Sigmoid colon (tissue), 7 donors: ENCODE measurements at regions of chr3 and their contacts with region 1.

Region 1: GRCh38 chr3:39288300-39288808 is 8.5 kb upstream of the CX3CR1 start:
- DNase-seq: peak; percentile 81
- H3K4me3 ChIP-seq: no peak overlapping the region
- H3K27ac ChIP-seq: no peak overlapping the region
- H3K4me1 ChIP-seq: no peaks in the 10 kb centered on the region
- H3K27me3 ChIP-seq: no peaks in the 10 kb centered on the region
- CTCF ChIP-seq: peak; percentile 64 to 83 (median 74)
- EP300 ChIP-seq: no peak
- POLR2A ChIP-seq: no peak

Region 2: DNA sequence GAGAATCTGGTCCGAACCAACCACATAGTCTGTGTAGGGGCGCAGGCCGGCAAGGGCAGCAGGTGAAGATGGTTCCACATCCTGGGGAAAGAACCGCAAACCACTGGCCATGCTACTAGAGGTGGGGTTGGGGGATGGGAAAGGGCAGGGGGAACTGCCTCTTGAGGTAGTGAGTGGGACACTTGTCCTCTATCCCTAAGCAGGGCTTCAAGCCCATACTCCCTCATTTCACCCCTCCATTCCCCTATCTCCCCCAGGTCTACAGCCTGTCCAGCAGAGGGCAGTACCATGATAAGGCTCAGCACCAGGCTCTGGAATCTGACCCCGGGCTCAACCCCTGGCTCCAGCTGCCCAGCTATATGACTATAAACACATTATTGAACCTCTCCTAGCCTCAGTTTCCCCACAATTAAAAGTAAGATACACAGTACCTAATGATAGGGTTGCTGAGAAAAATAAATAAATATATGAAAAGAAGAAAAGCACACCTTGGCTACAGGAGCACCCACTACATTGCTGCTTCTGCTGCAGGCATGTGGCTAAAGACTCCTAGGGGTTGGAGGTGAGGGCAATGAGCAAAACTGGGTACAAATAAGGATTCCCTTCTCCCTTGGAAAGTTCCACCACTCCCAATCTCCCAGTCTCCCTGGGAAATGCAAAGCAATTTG is 187.2 kb before region 1 on chr3:
- intact Hi-C with region 1: loop called (anchors 2 kb)
- DNase-seq: no peak
- H3K4me3 ChIP-seq: no peak overlapping the region
- H3K27ac ChIP-seq: no peak overlapping the region
- H3K4me1 ChIP-seq: peaks cover 0 to 39% (median 29%) of the 10 kb centered on the region in 4 donors
- H3K27me3 ChIP-seq: no peaks in the 10 kb centered on the region
- CTCF ChIP-seq: peak in 3 of 4 experiments; percentile 18 to 58 (median 35)
- EP300 ChIP-seq: no peak
- POLR2A ChIP-seq: no peak

Region 3: GRCh38 chr3:39126532-39127071 is 161.8 kb before region 1 on chr3:
- intact Hi-C with region 1: loop called (anchors 1 kb)
- DNase-seq: peak; percentile 70
- H3K4me3 ChIP-seq: no peak overlapping the region
- H3K27ac ChIP-seq: peak overlapping the region in 1 of 4 donors; percentile 65
- H3K4me1 ChIP-seq: peaks cover 0 to 14% (median 10%) of the 10 kb centered on the region in 4 donors
- H3K27me3 ChIP-seq: no peaks in the 10 kb centered on the region
- CTCF ChIP-seq: peak; percentile 56 to 86 (median 67)
- EP300 ChIP-seq: no peak
- POLR2A ChIP-seq: no peak

Region 4: GRCh38 chr3:39189959-39190269 is 98.4 kb before region 1 on chr3:
- intact Hi-C with region 1: loop called (anchors 2 kb)
- DNase-seq: peak; percentile 75
- H3K4me3 ChIP-seq: no peak overlapping the region
- H3K27ac ChIP-seq: no peak overlapping the region
- H3K4me1 ChIP-seq: peaks cover 0 to 15% (median 4%) of the 10 kb centered on the region in 4 donors
- H3K27me3 ChIP-seq: no peaks in the 10 kb centered on the region
- CTCF ChIP-seq: peak; percentile 59 to 71 (median 69)
- EP300 ChIP-seq: no peak
- POLR2A ChIP-seq: no peak

Region 5: DNA sequence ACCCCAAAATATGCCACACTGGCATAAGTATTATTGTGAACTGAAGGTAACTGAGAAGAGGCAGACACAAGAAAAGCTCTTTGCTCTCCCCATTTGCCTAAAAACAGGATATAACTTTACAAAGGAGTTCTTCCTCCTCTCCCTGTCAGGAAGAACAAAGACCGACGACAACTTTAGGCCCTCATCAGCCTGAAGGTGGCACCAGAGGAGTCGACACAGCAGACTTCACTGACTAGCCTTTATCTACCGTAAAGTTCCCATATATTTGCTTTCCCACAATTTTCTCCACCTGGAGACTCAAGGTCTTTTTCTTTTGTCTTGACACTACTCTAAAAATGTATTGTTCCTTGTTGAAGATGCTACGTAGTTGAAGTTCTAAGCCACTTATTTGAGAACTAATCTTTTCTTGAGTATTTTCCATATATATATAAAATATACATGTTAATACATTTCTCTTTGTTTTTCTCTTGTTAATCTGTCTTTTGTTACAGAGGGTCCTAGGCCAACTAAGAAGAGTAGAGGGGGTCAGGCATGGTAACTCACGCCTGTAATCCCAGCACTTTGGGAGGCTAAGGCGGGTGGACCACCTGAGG is 79.8 kb before region 1 on chr3:
- intact Hi-C with region 1: loop called (anchors 5 kb)
- DNase-seq: no peak
- H3K4me3 ChIP-seq: no peak overlapping the region
- H3K27ac ChIP-seq: no peak overlapping the region
- H3K4me1 ChIP-seq: no peaks in the 10 kb centered on the region
- H3K27me3 ChIP-seq: no peaks in the 10 kb centered on the region
- CTCF ChIP-seq: peak in 2 of 4 experiments; percentile 37 to 42
- EP300 ChIP-seq: no peak
- POLR2A ChIP-seq: no peak

Region 6: DNA sequence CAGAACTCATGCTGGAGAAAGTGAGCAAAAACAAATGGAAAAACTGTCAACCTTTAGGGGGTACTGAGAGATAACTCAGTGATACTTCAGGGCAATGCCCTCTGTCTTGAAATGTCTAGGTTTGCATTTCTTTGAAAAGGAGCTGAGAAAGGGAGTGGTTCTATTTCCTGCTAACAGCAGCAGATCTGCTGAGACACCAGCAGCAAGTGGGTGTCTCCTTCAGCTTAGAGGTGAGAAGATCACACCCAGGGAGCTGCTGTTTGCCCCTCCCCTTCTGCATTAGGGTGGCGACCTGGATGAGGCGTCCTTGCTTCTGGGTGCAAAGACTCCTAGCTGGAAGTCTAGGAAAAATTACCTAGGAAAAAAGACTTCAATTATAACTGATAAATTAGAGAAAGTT is 53.6 kb before region 1 on chr3:
- intact Hi-C with region 1: no loop called
- DNase-seq: no peak
- H3K4me3 ChIP-seq: no peak overlapping the region
- H3K27ac ChIP-seq: no peak overlapping the region
- H3K4me1 ChIP-seq: no peaks in the 10 kb centered on the region
- H3K27me3 ChIP-seq: no peaks in the 10 kb centered on the region
- CTCF ChIP-seq: no peak
- EP300 ChIP-seq: no peak
- POLR2A ChIP-seq: no peak